ENCODE measurements at regions of chr17 and their contacts with region 1.

Region 1: DNA sequence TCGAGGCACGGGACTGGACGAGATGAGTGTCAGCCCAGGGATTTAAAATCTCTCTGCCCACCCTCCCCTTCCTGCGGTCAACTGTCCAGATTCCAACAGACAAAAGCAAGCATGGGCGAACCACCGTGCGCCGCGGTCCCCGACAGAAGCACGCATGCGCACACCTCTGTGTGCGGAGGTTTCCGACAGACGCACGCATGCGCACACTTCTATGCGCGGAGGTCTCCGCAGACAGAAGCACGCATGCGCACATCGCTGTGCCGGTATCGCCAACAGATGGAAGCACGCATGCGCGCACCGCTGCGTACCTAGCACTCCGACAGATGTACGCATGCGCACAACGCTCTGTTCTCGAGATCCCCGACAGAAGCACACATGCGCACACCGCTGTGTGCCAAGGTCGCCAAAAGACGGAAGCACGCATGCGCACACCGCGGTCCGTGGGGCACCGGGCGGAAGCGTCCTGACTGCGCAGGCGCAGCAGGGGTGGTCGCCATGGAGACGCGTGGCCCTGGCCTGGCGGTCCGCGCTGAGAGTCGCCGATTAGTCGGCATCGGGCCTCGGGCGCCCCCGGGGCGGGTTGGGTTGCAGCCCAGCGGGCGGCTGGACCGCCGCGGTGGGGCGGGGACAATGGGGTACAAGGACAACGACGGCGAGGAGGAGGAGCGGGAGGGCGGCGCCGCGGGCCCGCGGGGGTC is 57.4 kb upstream of the RPH3AL start:
- DNase-seq: peak; percentile 100
- H3K4me3 ChIP-seq: peak overlapping the region; percentile 4 to 90 (median 41)
- H3K27ac ChIP-seq: peak overlapping the region; percentile 4
- H3K4me1 ChIP-seq: peaks cover 5% of the 10 kb centered on the region
- H3K27me3 ChIP-seq: no peaks in the 10 kb centered on the region
- CTCF ChIP-seq: no peak
- POLR2A ChIP-seq: peak; percentile 75

Region 2: GRCh38 chr17:301681-302298 is 108.2 kb before region 1 on chr17:
- CTCF ChIA-PET with region 1: no interaction called
- POLR2A ChIA-PET with region 1: no interaction called
- dilution Hi-C with region 1: no loop called
- intact Hi-C with region 1: no loop called
- DNase-seq: no peak
- H3K4me3 ChIP-seq: no peak overlapping the region
- H3K27ac ChIP-seq: no peak overlapping the region
- H3K4me1 ChIP-seq: no peaks in the 10 kb centered on the region
- H3K27me3 ChIP-seq: no peaks in the 10 kb centered on the region
- CTCF ChIP-seq: no peak
- POLR2A ChIP-seq: no peak

Region 3: DNA sequence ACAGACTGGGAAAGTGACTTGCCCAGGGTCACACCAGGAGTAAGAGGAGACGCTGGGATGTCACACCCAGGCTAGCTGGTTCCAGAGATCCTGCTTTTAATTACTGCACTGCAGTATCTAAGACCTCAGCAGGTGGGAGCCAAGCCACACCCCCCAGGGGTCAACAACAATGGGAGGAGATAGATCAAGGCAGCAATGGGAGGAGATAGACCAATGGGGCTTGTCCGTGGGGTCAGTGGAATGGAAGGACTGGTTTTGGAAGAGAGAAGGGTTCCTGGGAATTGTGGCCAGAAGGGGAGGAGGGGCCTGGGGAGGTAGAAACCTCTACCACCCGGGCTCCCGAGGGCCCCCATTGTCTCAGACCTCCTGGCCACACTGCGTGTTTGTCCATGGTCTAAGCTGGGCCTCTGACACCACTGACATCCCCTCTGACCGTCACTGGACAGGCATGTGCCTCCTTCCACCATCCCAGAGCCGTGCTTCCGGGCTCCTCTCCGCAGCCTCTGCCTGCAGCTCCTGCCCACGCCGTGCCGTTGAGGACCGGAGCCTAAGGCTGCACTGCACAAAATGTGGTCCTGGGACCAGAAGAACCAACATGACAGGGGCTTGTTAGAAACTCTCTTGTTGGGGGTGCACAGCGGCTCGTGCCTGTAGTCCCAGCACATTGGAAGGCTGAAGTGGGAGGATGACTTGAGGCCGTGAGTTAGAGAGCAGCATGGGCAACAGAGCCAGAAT is 12.4 kb after region 1 on chr17:
- CTCF ChIA-PET with region 1: interaction called, 23 read pairs
- POLR2A ChIA-PET with region 1: no interaction called
- dilution Hi-C with region 1: no loop called
- intact Hi-C with region 1: no loop called
- DNase-seq: no peak
- H3K4me3 ChIP-seq: no peak overlapping the region
- H3K27ac ChIP-seq: no peak overlapping the region
- H3K4me1 ChIP-seq: no peaks in the 10 kb centered on the region
- H3K27me3 ChIP-seq: no peaks in the 10 kb centered on the region
- CTCF ChIP-seq: no peak
- POLR2A ChIP-seq: no peak

Region 4: GRCh38 chr17:520447-521182 is 110.6 kb after region 1 on chr17:
- CTCF ChIA-PET with region 1: interaction called, 11 read pairs
- POLR2A ChIA-PET with region 1: no interaction called
- dilution Hi-C with region 1: no loop called
- intact Hi-C with region 1: no loop called
- DNase-seq: peak; percentile 74
- H3K4me3 ChIP-seq: no peak overlapping the region
- H3K27ac ChIP-seq: peak overlapping the region; percentile 80
- H3K4me1 ChIP-seq: peaks cover 38% of the 10 kb centered on the region
- H3K27me3 ChIP-seq: no peaks in the 10 kb centered on the region
- CTCF ChIP-seq: no peak
- POLR2A ChIP-seq: no peak

Region 5: DNA sequence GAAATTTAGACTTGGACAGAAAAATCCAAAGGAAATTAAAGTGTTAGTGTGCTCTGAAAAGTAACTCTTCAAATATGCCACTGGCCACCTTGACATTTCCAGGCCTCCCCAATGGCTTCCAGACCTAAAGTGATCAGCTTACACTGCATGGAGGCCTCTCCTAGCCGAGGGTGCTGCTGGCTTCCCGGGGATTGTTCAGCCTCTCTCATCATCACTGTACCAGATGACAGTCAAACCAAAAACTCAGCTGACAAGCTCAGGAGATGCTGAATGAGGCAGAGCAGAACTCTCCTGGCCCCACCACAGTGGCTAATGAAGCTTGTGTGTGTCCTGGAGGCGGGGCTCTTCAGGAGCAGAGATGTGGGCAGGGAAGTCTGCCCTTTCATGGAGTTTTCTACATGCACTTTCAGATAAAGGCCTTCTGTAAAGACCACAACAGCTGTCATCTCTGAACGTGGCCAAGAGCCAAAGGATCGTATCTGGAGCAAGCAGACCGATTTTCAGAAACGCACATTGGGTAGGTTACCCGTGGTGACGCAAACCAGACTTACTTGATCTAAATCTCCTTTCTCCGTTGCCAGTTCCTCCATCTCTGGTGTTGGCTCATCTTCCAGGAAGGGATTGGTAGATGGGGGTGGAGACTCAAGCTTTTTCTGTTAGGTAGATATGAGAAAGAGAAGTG is 191.4 kb after region 1 on chr17:
- CTCF ChIA-PET with region 1: interaction called, 30 read pairs
- POLR2A ChIA-PET with region 1: no interaction called
- dilution Hi-C with region 1: no loop called
- intact Hi-C with region 1: loop called (anchors 2 kb)
- DNase-seq: peak; percentile 88
- H3K4me3 ChIP-seq: no peak overlapping the region
- H3K27ac ChIP-seq: peak overlapping the region; percentile 33
- H3K4me1 ChIP-seq: peaks cover 33% of the 10 kb centered on the region
- H3K27me3 ChIP-seq: no peaks in the 10 kb centered on the region
- CTCF ChIP-seq: no peak
- POLR2A ChIP-seq: no peak

Region 6: DNA sequence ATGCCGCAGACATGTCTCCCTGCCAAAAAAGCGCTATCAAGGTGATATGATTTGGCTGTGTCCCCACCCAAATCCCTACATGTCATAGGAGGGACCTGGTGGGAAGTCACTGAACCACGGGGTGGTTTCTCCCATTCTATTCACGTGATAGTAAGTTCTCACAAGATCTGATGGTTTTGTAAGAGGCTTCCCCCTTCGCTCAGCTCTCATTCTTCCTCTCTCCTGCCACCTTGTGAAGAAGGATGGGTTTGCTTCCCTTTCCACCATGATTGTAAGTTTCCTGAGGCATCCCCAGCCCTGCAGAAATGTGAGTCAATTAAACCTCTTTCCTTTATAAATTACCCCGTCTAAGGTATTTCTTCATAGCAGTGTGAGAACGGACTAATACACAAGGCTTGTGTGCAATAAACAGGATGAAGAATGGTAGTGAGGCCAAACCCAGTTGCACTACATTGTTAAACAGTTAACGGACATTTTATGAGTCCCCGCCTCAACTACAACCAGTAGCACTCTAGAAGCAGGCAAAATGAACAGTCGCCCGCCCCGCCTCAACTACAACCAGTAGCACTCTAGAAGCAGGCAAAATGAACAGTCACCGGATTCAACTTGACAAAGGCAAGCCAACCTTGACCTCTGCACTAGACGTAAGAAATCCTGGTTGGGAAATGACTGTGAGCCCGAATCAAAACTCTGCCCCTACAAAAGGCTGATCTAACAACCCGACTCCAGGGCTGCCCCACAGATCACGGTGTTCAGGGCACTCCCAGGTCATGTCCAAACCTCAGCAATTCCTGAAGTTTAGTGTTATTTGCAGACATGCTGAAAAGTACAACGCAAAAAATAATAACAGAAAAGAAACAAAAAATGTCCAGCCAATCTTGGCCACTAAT is 278.3 kb after region 1 on chr17:
- CTCF ChIA-PET with region 1: interaction called, 762 read pairs
- POLR2A ChIA-PET with region 1: interaction called, 3 read pairs
- dilution Hi-C with region 1: no loop called
- intact Hi-C with region 1: loop called (anchors 1 kb)
- DNase-seq: peak; percentile 34
- H3K4me3 ChIP-seq: no peak overlapping the region
- H3K27ac ChIP-seq: no peak overlapping the region
- H3K4me1 ChIP-seq: peaks cover 4% of the 10 kb centered on the region
- H3K27me3 ChIP-seq: no peaks in the 10 kb centered on the region
- CTCF ChIP-seq: peak in 1 of 2 donors; percentile 22
- POLR2A ChIP-seq: no peak

Region 7: GRCh38 chr17:752002-752619 is 342.1 kb after region 1 on chr17 and contains the start of gene GEMIN4:
- CTCF ChIA-PET with region 1: interaction called, 18 read pairs
- POLR2A ChIA-PET with region 1: no interaction called
- dilution Hi-C with region 1: no loop called
- intact Hi-C with region 1: no loop called
- DNase-seq: peak; percentile 92
- H3K4me3 ChIP-seq: peak within 1 kb of the TSS; percentile 34 to 82 (median 78)
- H3K27ac ChIP-seq: peak within 1 kb of the TSS; percentile 30
- H3K4me1 ChIP-seq: peaks cover 18% of the 10 kb centered on the region
- H3K27me3 ChIP-seq: no peaks in the 10 kb centered on the region
- CTCF ChIP-seq: peak; percentile 94 to 99
- POLR2A ChIP-seq: peak; percentile 64
- total RNA-seq, gene GEMIN4: 29.1 and 29.9 TPM in 2 replicates